ENCODE measurements at regions of chr9 and their contacts with region 1.

Region 1: DNA sequence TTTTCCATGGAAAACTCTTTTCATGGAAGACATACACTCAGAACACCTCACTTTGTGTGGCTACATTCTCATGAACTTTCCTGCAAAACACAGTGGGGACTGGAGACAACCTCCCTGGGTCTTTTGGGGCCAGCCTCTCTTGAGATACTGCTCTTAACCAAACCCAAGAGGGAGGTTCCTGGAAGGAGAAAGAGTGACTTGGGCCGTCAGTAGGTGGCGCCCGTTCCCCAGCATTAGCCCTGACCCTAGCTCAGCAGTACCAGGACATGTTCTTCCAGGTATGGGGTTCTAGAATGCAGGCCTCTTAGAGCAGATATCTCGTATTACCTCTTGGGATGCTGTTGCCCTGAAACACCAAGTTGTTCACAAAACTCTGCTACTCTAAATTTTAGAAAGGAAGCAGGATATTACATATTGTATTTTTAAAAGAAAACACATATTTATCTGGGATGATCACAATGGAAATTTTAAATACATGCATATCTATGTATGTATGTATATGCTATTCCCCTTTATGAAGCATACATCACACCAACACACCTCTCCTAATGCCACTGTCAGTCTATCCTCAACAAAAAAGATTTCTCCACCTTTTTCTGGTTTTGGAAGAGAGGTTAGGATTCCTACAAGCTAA is 15.8 kb upstream of the GLIS3 start:
- DNase-seq: peak; percentile 67 to 90
- H3K4me3 ChIP-seq: no peak overlapping the region
- H3K27ac ChIP-seq: no peak overlapping the region
- H3K4me1 ChIP-seq: no peaks in the 10 kb centered on the region
- H3K27me3 ChIP-seq: no peaks in the 10 kb centered on the region
- CTCF ChIP-seq: peak; percentile 92 to 96 (median 93)
- EP300 ChIP-seq: no peak
- POLR2A ChIP-seq: no peak
- RAD21 ChIP-seq: peak; percentile 95 to 96

Region 2: GRCh38 chr9:4068449-4068848 is 247.2 kb before region 1 on chr9:
- CTCF ChIA-PET with region 1: no interaction called
- POLR2A ChIA-PET with region 1: no interaction called
- DNase-seq: no peak
- H3K4me3 ChIP-seq: no peak overlapping the region
- H3K27ac ChIP-seq: no peak overlapping the region
- H3K4me1 ChIP-seq: no peaks in the 10 kb centered on the region; a peak in 1 of 7 replicates
- H3K27me3 ChIP-seq: no peaks in the 10 kb centered on the region
- CTCF ChIP-seq: no peak
- EP300 ChIP-seq: no peak
- POLR2A ChIP-seq: no peak
- RAD21 ChIP-seq: no peak

Region 3: DNA sequence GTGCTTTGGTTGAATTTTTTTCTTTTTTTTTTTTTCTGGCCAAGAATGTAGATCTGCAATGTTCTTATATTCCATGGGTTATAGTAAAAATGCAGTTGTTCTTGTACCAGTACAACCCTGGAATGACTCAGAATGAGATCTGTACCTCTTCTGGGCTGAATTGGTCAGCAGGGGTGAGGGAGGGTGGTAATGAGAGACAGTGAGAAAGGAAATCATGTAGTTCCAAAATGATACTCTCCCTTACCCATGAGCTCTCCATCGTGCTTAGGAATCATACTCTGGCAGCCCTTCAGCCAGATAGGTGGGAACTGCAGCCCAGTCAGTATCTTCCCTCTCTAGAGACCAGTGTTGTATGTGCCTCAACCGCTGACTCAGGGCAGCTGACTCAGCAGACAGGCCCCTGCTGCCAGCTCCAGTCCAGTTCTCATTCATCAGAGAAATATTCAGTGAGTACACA is 13.7 kb before region 1 on chr9:
- CTCF ChIA-PET with region 1: interaction called, 38 read pairs
- POLR2A ChIA-PET with region 1: interaction called, 3 read pairs
- DNase-seq: no peak
- H3K4me3 ChIP-seq: no peak overlapping the region
- H3K27ac ChIP-seq: no peak overlapping the region
- H3K4me1 ChIP-seq: peaks cover 0 to 7% (median 7%) of the 10 kb centered on the region in 4 experiments; a peak in 6 of 7 replicates
- H3K27me3 ChIP-seq: peaks cover 12 to 43% (median 28%) of the 10 kb centered on the region in 4 experiments
- CTCF ChIP-seq: no peak
- EP300 ChIP-seq: no peak
- POLR2A ChIP-seq: no peak
- RAD21 ChIP-seq: no peak

Region 4: DNA sequence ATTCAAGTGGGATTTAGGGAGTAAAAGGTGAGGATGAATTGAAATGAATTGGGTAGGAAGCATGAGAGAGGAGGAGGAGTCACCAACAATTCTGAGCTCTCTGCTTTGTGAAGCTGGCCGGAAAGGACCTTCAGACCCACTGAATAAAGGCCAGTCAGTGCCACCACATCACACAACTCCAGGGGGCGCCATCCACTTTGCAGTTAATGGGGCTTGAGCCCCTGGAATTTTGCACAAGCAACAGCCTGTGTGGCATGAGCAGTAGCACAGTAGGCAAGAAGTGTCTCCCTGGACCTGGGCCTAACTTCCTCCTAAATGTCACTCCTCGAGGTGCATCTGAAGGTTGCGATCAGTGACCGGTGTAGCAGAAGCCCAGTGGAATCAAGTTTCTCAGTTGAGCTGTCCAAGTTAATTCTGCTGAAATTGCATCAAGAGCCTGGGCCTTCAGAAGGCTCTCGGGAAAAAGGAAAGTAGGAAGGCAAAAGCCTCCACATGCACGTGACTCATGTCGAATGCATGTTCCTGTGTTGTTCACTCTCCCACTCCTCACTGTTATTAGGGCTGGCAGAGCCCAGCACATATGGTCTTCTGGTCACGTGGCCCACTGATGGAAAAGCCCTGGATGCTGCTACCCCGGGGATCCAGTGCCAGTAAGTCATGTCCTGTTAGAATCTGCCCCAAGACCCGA is 11.9 kb after region 1 on chr9:
- CTCF ChIA-PET with region 1: interaction called, 148 read pairs
- POLR2A ChIA-PET with region 1: no interaction called
- DNase-seq: peak in 1 of 2 experiments; percentile 52
- H3K4me3 ChIP-seq: no peak overlapping the region
- H3K27ac ChIP-seq: no peak overlapping the region
- H3K4me1 ChIP-seq: no peaks in the 10 kb centered on the region
- H3K27me3 ChIP-seq: no peaks in the 10 kb centered on the region
- CTCF ChIP-seq: peak; percentile 30 to 42 (median 32)
- EP300 ChIP-seq: no peak
- POLR2A ChIP-seq: no peak
- RAD21 ChIP-seq: peak; percentile 36 to 55; a peak in 3 of 4 replicates

Region 5: GRCh38 chr9:4339357-4339756 is 23.7 kb after region 1 on chr9:
- CTCF ChIA-PET with region 1: interaction called, 148 read pairs
- POLR2A ChIA-PET with region 1: interaction called, 3 read pairs
- DNase-seq: peak; percentile 38 to 78
- H3K4me3 ChIP-seq: no peak overlapping the region
- H3K27ac ChIP-seq: no peak overlapping the region
- H3K4me1 ChIP-seq: no peaks in the 10 kb centered on the region
- H3K27me3 ChIP-seq: no peaks in the 10 kb centered on the region; a peak in 1 of 7 replicates
- CTCF ChIP-seq: peak; percentile 56 to 89 (median 78)
- EP300 ChIP-seq: no peak
- POLR2A ChIP-seq: no peak
- RAD21 ChIP-seq: peak; percentile 73 to 80

Region 6: GRCh38 chr9:4353236-4353635 is 37.5 kb after region 1 on chr9:
- CTCF ChIA-PET with region 1: interaction called, 16 read pairs
- POLR2A ChIA-PET with region 1: no interaction called
- DNase-seq: no peak
- H3K4me3 ChIP-seq: no peak overlapping the region
- H3K27ac ChIP-seq: no peak overlapping the region
- H3K4me1 ChIP-seq: no peaks in the 10 kb centered on the region
- H3K27me3 ChIP-seq: no peaks in the 10 kb centered on the region
- CTCF ChIP-seq: no peak
- EP300 ChIP-seq: no peak
- POLR2A ChIP-seq: no peak
- RAD21 ChIP-seq: no peak

Region 7: GRCh38 chr9:4366591-4367330 is 51.1 kb after region 1 on chr9:
- CTCF ChIA-PET with region 1: interaction called, 64 read pairs
- POLR2A ChIA-PET with region 1: no interaction called
- DNase-seq: peak; percentile 33 to 59
- H3K4me3 ChIP-seq: no peak overlapping the region
- H3K27ac ChIP-seq: no peak overlapping the region
- H3K4me1 ChIP-seq: 0 out of 7 replicates have a peak, but pooled peaks cover 0 to 1% (median 0%) of the 10 kb centered on the region in 4 experiments
- H3K27me3 ChIP-seq: no peaks in the 10 kb centered on the region
- CTCF ChIP-seq: peak; percentile 58 to 91 (median 72)
- EP300 ChIP-seq: no peak
- POLR2A ChIP-seq: no peak
- RAD21 ChIP-seq: peak; percentile 89 to 91

Region 8: DNA sequence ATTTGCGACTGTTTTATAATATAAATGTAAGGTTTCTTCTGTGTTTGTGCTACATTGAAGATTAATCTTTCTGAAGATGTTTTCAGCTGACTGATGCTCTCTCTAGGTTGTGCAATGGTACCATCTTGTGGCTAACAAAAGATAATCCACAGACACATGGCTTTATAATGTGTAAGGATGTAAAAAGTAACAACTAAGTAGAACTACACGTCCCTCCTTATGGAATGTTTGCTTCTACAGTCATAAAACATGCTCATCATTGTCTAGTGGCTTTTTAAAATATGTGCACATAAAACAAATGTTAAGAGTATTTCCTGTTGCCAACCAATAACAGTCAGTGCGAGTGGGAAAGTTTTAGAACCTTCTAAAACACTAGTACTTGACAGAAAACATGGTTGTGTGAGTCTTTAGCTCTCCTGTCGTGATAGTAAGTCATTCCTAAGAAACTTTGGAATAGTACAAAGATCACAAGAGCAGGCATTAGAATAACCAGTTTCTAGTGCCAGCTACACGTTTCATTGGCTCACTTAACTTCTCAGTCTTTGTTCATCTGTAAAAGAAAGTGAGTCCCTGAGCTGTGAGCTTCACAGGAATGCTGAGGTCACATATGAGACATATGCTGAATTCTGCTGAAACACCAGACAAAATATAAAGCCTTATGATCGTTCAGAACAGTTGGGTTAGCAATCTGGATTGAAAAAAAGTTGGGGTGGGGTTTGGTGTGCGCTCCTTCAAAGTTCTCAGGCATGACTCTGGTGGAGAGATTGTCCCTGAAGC is 59.9 kb after region 1 on chr9:
- CTCF ChIA-PET with region 1: interaction called, 64 read pairs
- POLR2A ChIA-PET with region 1: no interaction called
- DNase-seq: no peak
- H3K4me3 ChIP-seq: no peak overlapping the region
- H3K27ac ChIP-seq: no peak overlapping the region
- H3K4me1 ChIP-seq: 0 out of 7 replicates have a peak, but pooled peaks cover 0 to 1% (median 0%) of the 10 kb centered on the region in 4 experiments
- H3K27me3 ChIP-seq: no peaks in the 10 kb centered on the region
- CTCF ChIP-seq: peak in 2 of 3 experiments; percentile 16 to 34; a peak in 2 of 4 replicates
- EP300 ChIP-seq: no peak
- POLR2A ChIP-seq: no peak
- RAD21 ChIP-seq: peak; percentile 74

Measured in H1 (cell line).